Activated CD4-positive, alpha-beta T cell treated with anti-CD3 and anti-CD28 coated beads for 36 hours (primary cell): ENCODE measurements at regions of chr12 and their contacts with region 1.

Region 1: GRCh38 chr12:53613821-53614220 is 12.4 kb downstream of the ATF7 start:
- DNase-seq: no peak
- ATAC-seq: no peak
- H3K4me3 Mint-ChIP-seq: no peak overlapping the region
- H3K27ac Mint-ChIP-seq: no peak overlapping the region
- H3K4me1 Mint-ChIP-seq: peaks cover 29% of the 10 kb centered on the region
- H3K27me3 Mint-ChIP-seq: no peaks in the 10 kb centered on the region

Region 2: GRCh38 chr12:53561590-53561953 is 52.2 kb before region 1 on chr12:
- CTCF ChIA-PET with region 1: interaction called, 3 read pairs
- POLR2A ChIA-PET with region 1: no interaction called
- intact Hi-C with region 1: loop called in 1 of 2 experiments (anchors 5 kb)
- DNase-seq: no peak
- ATAC-seq: peak; percentile 93
- H3K4me3 Mint-ChIP-seq: no peak overlapping the region
- H3K27ac Mint-ChIP-seq: peak overlapping the region; percentile 76
- H3K4me1 Mint-ChIP-seq: peaks cover 63% of the 10 kb centered on the region
- H3K27me3 Mint-ChIP-seq: no peaks in the 10 kb centered on the region

Region 3: DNA sequence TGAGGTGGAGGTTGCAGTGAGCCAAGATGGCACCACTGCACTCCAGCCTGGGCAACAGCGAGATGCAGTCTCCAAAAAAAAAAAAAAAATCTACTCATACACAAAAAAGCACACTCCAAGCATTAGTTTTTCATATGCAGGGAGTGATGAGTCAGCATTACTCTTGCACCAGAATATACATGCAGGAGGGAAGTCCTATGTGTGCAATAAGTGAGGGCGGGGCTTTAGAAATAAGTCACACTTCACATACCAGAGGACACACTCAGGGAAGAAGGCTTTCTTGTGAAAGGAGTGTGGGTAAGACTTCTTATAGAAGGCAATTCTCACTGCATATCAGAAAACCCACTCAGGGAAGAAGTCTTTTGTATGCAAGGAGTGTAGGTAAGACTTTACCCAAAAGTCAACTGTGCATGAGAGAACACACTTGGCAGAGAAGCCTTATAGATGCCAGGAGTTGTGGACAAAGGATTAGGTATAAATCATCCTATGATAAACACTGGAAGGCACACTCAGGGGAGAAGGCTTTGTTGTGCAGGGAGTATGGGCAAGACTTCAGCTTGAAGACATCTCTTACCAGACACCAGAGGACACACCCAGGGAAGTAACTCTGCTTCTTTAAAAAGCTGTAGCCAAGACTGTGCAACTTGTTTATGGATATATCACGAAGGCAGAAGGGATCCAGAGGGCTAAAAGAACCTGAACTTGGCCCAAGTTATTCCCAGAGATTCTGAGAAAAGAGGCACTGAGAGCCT is 38.1 kb before region 1 on chr12:
- CTCF ChIA-PET with region 1: no interaction called
- POLR2A ChIA-PET with region 1: no interaction called
- intact Hi-C with region 1: loop called in 1 of 2 experiments (anchors 5 kb)
- DNase-seq: peak; percentile 23
- ATAC-seq: peak; percentile 78
- H3K4me3 Mint-ChIP-seq: no peak overlapping the region
- H3K27ac Mint-ChIP-seq: no peak overlapping the region
- H3K4me1 Mint-ChIP-seq: peaks cover 45% of the 10 kb centered on the region
- H3K27me3 Mint-ChIP-seq: no peaks in the 10 kb centered on the region